Left cardiac atrium (tissue), 4 donors: ENCODE measurements at regions of chr17 and their contacts with region 1.

Region 1: GRCh38 chr17:64281962-64282727 is 19.1 kb upstream of the TEX2 start:
- DNase-seq: peak; percentile 65
- ATAC-seq: peak; percentile 36 to 39

Region 2: GRCh38 chr17:64025732-64026294 is 256.3 kb before region 1 on chr17:
- intact Hi-C with region 1: loop called in 1 of 2 experiments (anchors 10 kb)
- DNase-seq: peak; percentile 85
- ATAC-seq: peak; percentile 79

Region 3: GRCh38 chr17:64063766-64064224 is 218.3 kb before region 1 on chr17:
- intact Hi-C with region 1: loop called in 1 of 2 experiments (anchors 10 kb)
- DNase-seq: peak; percentile 71
- ATAC-seq: peak; percentile 55 to 72

Region 4: DNA sequence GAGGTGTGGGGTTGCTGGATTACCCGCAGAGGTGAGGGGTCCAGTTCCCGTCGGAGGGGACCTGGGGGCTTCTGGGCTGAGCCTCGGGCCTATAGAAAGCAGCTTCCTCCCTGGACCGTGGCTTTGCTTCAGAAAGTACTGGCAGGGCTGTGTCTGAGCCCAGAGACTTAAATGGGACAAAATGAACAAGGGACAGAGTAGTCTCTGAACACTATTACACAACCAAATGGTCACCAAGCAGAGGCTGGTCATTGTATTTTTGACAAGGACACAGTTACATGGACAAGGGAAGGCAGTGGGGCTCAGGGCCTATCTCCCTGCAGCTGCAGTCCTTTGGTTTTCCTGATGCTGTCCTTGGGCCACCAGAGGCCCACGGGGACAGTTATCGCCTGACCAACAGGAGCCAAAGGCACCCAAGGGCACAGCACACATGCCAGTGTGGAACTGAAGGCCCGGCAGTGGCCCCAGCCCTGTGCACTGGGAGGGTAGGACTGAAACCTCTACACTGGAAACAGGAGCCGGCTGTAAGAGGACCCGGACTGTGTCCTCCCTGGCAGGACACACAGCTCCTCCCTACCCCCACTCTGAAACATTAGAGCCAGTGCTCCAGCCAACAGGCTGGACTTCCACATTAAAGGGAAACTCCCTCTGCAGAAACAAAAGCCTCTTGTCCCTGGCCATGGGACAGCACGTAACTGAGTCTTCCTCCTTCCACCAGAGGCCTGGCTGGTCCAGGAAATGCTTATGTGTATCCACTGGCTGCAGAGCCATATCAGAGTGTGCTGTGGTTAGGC is 126.2 kb before region 1 on chr17:
- intact Hi-C with region 1: loop called in 1 of 2 experiments (anchors 2 kb)
- DNase-seq: peak; percentile 75
- ATAC-seq: peak; percentile 89 to 91

Region 5: DNA sequence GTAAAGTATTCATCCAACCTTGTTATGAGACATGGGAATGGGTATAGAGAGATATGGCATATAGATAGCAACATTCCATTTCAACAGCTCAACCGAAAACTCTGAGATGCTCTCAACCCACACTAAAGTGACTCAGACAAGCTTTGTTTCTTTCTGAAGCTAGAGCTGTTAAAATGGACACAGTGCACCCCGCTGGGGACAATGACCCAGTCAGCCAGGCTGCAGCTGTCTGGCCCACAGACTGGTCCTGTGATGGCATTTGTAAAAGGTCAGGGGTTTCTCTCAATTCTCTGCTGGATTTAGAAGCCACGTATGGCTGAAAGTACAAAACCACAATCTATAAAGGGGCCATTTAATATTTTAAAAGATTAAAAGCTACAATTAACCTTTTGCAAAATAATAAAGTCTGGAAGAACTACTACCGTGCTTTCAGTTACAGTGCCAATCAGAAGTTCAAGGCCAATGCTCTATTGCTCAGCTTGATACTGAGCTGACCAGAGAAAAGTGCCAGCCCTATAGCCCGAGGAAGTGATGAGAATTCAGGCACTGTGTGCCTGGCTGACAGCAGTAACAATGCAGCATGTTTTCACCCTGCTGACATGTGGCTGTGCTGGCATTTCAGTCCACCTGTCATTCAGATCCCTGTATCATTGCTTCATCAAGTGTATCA is 79.3 kb before region 1 on chr17:
- intact Hi-C with region 1: loop called in 1 of 2 experiments (anchors 10 kb)
- DNase-seq: no peak
- ATAC-seq: peak; percentile 48 to 69

Region 6: DNA sequence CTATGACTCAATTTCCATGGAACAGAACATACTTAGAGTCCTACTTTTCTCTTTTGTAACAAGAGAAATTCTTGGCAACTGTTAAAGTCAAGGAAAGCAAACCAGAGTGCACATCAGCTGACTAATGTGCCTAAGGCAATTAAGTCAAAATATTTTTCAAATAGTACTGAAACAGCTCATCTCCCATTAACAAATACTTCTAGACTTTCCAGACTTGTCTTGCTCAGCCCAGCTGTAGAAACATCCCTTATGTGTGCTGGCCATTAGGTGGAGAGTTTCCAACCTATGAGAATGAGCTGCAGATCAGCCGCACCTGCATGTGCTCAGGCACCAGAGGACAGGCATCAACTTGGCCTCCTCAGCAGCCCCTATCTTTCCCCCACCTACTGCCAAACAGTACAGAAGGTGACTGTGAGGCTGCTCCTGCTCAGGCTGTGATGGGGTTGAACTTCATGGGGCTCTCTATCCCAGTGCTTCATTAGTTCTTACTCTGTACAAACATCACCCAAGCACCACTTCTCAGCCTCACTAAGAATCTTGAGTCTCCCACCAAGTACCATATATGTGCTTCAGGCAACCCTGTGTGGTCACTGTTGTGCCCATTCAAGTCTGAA is 51.2 kb before region 1 on chr17:
- intact Hi-C with region 1: no loop called
- DNase-seq: no peak
- ATAC-seq: peak; percentile 72 to 91